Panc1 (cell line): ENCODE measurements at regions of chr7 and their contacts with region 1.

Region 1: GRCh38 chr7:81469869-81470723 is 299.8 kb downstream of the HGF start:
- DNase-seq: no peak
- ATAC-seq: peak; percentile 95
- H3K4me3 ChIP-seq: no peak overlapping the region
- H3K27ac ChIP-seq: peak overlapping the region; percentile 89
- H3K4me1 ChIP-seq: peaks cover 27% of the 10 kb centered on the region
- H3K27me3 ChIP-seq: no peaks in the 10 kb centered on the region
- CTCF ChIP-seq: peak; percentile 85

Region 2: DNA sequence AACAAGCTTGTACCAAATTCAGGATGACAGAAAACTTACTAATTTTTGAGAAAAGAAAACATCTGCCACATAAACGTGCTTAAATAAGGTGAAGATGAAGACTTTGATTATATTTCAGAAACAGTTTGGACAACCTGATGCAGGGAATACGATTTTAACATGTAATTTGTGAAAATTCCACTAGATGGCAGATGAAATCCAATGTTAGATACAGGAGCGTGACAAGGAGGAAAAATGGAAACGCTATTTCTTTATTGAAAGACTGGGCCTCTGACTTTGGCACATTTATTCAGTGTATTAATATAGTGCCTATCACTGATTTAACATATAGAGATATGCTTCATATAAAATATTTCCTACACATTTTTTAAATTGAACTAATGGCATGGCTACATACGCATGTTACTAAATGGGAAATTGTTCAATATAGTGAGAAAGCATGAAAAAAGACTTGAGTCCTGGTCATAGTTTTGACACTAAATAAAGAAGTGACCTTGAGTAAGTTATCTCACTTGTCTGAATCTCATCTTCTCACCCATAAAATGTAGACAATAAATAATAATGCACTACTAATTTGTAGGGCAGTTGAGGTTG is 771.0 kb before region 1 on chr7:
- CTCF ChIA-PET with region 1: no interaction called
- POLR2A ChIA-PET with region 1: no interaction called
- in situ Hi-C with region 1: no loop called
- intact Hi-C with region 1: loop called (anchors 2 kb)
- DNase-seq: peak; percentile 78
- ATAC-seq: peak; percentile 91
- H3K4me3 ChIP-seq: no peak overlapping the region
- H3K27ac ChIP-seq: peak overlapping the region; percentile 87
- H3K4me1 ChIP-seq: peaks cover 21% of the 10 kb centered on the region
- H3K27me3 ChIP-seq: no peaks in the 10 kb centered on the region
- CTCF ChIP-seq: peak; percentile 56; the same call in 1 of the 2 replicates